ENCODE measurements at regions of chr6 and their contacts with region 1.

Region 1: DNA sequence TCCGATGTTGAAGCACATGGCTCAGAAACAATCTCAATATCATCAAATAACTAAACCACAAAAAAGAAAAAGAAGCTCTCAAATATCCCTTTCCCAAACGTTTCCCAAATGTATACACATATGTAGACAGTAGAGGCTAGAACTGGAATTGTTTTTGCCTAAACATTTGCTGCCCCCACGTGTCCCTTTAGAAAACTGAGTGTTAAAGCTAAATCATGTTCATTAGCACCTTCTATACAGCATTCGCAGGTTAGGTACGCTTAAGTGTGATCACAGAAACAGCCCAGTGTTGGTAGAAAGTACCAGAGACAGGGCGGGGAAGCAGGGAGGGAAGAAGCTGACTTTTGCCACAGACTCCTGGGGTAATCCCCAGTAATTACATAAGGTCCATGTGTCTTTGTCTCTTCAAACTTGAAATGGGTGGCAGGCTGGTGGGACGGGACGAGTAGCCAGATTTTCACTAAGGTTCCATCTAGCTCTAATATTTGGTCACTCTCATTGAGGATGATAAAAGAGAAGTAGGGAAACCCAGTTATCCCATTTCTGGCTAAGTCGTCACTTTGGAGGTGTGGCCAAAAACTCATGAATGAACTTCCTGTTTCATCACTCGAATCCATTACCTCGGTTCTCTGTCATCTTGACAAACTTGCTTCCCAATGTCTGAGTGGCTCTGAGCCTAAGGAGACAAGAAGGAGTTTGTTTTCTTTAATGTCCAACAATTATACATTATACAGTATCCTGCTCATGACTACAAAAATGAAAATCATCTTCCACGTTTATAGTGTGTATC is 15.0 kb upstream of the TFAP2A start:
- DNase-seq: peak; percentile 58 to 61
- H3K4me3 ChIP-seq: no peak overlapping the region; the same call in 1 of the 2 replicates
- H3K4me1 ChIP-seq: peaks cover 11% of the 10 kb centered on the region
- H3K27me3 ChIP-seq: no peaks in the 10 kb centered on the region

Region 2: GRCh38 chr6:8983188-8983688 is 1446.6 kb before region 1 on chr6:
- in situ Hi-C with region 1: loop called (anchors 25 kb)
- DNase-seq: peak; percentile 60 to 73
- H3K4me3 ChIP-seq: no peak overlapping the region
- H3K4me1 ChIP-seq: no peaks in the 10 kb centered on the region; the same call in 1 of the 2 replicates
- H3K27me3 ChIP-seq: no peaks in the 10 kb centered on the region

Region 3: DNA sequence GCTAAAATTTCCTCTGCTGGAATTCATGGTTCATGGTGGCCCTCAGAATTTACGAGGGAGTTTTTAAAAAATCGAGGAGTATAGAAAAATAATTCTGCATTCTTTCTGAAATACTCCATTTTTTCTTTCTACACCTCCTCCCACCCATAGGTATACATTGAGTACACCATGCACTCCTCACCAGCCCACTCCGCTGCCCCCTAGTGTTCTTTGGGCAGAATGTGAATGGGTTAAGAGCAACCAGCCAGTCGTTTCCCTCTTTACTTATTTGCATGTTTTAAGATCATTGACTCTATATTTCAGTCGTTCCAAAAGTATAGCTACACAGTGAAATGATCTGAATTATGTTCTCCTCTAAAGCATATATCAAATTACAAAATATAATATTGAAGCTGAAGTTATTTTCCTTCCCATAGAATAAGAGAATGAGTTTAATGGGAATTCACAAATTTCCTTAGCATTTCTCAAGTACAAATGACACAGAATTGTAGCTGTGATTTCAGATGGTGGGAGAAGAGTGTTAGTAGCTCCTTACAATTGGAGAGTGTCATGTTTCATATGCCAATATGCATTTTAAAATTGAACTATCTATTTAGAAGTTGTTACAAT is 1016.8 kb before region 1 on chr6:
- in situ Hi-C with region 1: no loop called
- DNase-seq: peak in 1 of 2 experiments; percentile 43
- H3K4me3 ChIP-seq: no peak overlapping the region
- H3K4me1 ChIP-seq: no peaks in the 10 kb centered on the region
- H3K27me3 ChIP-seq: no peaks in the 10 kb centered on the region

Region 4: DNA sequence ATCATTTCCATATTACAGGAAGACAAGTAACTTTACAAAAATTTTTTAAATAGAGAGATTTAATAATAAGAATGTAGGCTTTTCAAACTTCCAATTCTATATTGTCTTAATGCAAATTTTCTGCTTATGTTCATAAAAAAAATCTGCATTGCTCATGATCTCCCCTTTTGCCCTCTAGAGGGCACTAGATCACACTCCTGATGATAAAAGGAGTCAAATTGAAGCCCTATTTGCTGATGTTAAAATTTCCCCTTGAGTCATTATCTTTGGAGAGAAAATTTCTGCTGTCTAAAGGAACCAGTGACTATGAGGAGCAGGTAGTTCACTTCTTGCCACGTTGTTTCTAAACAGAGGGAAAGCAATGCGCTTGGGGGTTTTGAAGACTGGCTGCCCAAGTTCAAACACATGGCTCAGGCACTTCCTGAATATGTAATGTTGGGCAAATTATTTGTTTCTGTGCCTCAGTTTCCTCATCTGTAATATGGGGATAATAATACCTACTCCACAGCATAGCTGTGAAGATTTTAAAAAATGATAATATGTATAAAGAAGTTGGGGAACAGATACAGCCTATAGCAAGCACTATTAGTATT is 889.2 kb before region 1 on chr6:
- in situ Hi-C with region 1: loop called (anchors 25 kb)
- DNase-seq: peak; percentile 11 to 29
- H3K4me3 ChIP-seq: no peak overlapping the region
- H3K4me1 ChIP-seq: no peaks in the 10 kb centered on the region
- H3K27me3 ChIP-seq: no peaks in the 10 kb centered on the region

Region 5: GRCh38 chr6:10831609-10832008 is 401.8 kb after region 1 on chr6:
- in situ Hi-C with region 1: no loop called
- DNase-seq: no peak
- H3K4me3 ChIP-seq: no peak overlapping the region
- H3K4me1 ChIP-seq: peaks cover 4% of the 10 kb centered on the region
- H3K27me3 ChIP-seq: no peaks in the 10 kb centered on the region

Region 6: DNA sequence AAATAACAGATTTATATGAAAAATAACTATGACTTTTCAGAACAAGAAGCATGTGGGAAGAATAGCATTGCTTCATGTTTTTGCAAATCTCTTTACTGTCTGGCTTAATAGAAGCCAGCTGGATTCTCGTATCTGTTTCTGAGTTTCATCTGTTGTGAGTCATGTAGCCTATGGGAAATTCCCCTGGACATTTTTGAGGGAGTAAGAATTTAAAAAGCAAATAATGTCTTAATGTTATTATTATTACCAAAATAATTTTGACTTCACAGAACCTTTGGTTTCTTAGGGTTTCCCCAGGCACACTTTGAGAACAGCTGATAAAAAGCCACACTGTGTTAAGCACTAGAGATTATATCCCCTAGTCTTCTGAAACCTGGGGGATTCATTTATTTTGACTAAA is 532.8 kb after region 1 on chr6:
- in situ Hi-C with region 1: no loop called
- DNase-seq: no peak
- H3K4me3 ChIP-seq: no peak overlapping the region
- H3K4me1 ChIP-seq: no peaks in the 10 kb centered on the region
- H3K27me3 ChIP-seq: no peaks in the 10 kb centered on the region

Measured in HAP-1 (cell line).